ENCODE measurements at regions of chr6 and their contacts with region 1.

Region 1: GRCh38 chr6:44976719-44977641 is 351.1 kb upstream of the RUNX2 start:
- DNase-seq: peak; percentile 18
- H3K4me3 Mint-ChIP-seq: no peak overlapping the region
- H3K27ac Mint-ChIP-seq: peak overlapping the region; percentile 16
- H3K4me1 Mint-ChIP-seq: peaks cover 35% of the 10 kb centered on the region
- H3K27me3 Mint-ChIP-seq: no peaks in the 10 kb centered on the region

Region 2: DNA sequence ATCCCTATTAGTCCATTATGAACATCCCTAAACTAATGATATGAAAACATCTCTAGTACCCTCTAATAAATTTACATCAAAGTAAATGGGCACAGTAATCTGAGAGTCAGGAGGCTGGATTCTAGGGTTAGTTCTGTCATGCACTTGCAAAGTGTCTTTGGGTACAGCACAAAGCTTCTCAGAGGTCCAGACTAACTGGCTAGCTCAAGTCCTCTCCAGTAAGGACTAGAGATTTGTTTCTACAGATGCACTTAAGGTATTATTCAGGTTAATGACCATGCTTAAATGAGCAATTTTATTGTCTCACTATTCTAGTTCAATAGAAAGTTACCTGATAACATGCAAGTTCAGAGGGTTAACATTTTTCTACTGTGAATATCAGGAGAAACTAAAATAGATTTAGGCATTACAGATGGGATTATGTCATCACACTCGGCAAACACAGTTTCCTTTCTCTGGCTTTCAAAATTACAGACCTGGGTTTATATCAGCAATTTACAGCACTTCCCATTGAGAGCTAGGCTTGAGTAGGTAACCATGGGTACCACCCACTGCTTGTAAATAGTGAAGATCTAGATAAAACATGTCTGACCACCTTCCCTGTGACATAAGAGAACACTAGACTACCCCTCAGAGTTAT is 51.8 kb before region 1 on chr6:
- CTCF ChIA-PET with region 1: no interaction called
- intact Hi-C with region 1: loop called (anchors 2 kb)
- DNase-seq: peak; percentile 36
- H3K4me3 Mint-ChIP-seq: peak overlapping the region; percentile 0
- H3K27ac Mint-ChIP-seq: peak overlapping the region; percentile 16
- H3K4me1 Mint-ChIP-seq: peaks cover 53% of the 10 kb centered on the region
- H3K27me3 Mint-ChIP-seq: no peaks in the 10 kb centered on the region

Region 3: DNA sequence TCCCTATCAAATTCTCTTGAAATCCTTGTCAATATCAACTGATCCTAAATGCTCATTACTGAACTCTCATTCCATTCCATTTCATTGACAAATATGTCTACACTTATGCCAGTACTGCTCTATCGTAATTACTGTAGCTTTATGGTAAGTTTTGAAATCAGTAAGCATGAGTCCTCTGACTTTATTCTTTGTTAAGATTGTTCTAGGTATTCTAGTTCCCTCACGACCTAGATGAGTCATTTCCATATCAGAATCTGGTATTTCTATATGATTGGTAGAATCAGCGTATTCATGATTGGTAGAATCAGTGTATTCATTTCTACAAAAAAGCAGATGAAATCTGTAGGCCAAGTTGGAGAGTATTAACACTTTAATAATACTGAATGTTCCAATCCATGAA is 32.6 kb after region 1 on chr6:
- CTCF ChIA-PET with region 1: no interaction called
- intact Hi-C with region 1: loop called (anchors 1 kb)
- DNase-seq: no peak
- H3K4me3 Mint-ChIP-seq: no peak overlapping the region
- H3K27ac Mint-ChIP-seq: no peak overlapping the region
- H3K4me1 Mint-ChIP-seq: peaks cover 12% of the 10 kb centered on the region
- H3K27me3 Mint-ChIP-seq: no peaks in the 10 kb centered on the region

Region 4: GRCh38 chr6:45212976-45213375 is 236.0 kb after region 1 on chr6:
- CTCF ChIA-PET with region 1: no interaction called
- intact Hi-C with region 1: no loop called
- DNase-seq: peak; percentile 20
- H3K4me3 Mint-ChIP-seq: no peak overlapping the region
- H3K27ac Mint-ChIP-seq: no peak overlapping the region
- H3K4me1 Mint-ChIP-seq: peaks cover 14% of the 10 kb centered on the region
- H3K27me3 Mint-ChIP-seq: no peaks in the 10 kb centered on the region

Measured in activated naive CD4-positive, alpha-beta T cell treated with anti-CD3 and anti-CD28 coated beads for 36 hours (primary cell).